Right cardiac atrium (tissue), 5 donors: ENCODE measurements at regions of chr10 and their contacts with region 1.

Region 1: DNA sequence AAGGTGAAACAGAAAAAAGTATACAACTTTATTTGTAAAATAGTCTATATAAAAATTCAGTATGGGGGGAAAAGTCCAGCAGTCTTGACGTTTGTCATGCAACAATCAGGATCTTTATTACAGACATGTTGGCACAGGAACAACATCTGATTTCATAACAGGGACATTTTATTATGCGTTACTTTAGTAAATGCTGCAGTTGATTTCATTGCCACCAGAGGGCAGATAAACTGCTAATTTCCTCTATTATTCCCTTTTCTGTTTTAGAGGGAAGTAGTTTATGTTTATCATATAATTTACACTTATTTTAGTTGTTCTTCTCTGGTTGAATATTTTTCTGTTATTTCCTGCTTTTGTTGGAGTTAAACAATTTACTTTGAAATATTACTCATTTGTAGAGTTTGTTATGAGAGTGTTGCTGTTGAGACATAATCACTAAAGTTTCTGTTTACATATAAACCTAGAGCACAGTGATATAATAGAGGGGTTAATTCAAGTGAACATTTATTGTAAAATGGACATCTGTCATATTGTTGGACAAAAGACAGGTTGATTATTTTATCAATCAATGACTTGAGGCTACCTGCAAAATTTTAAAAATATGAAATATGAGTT is 3.3 kb downstream of the PLXDC2 start:
- DNase-seq: no peak
- ATAC-seq: no peak
- H3K4me3 ChIP-seq: no peak overlapping the region
- H3K27ac ChIP-seq: no peak overlapping the region
- H3K4me1 ChIP-seq: no peaks in the 10 kb centered on the region
- H3K27me3 ChIP-seq: no peaks in the 10 kb centered on the region

Region 2: GRCh38 chr10:19922236-19922963 is 102.9 kb after region 1 on chr10:
- intact Hi-C with region 1: loop called in 2 of 4 experiments (anchors 10 kb)
- DNase-seq: no peak
- ATAC-seq: peak; percentile 73 to 77
- H3K4me3 ChIP-seq: no peak overlapping the region
- H3K27ac ChIP-seq: peak overlapping the region; percentile 99
- H3K4me1 ChIP-seq: peaks cover 10% of the 10 kb centered on the region
- H3K27me3 ChIP-seq: no peaks in the 10 kb centered on the region

Region 3: GRCh38 chr10:20768843-20769242 is 949.3 kb after region 1 on chr10:
- intact Hi-C with region 1: loop called in 3 of 4 experiments (anchors 10 kb)
- DNase-seq: no peak
- ATAC-seq: no peak
- H3K4me3 ChIP-seq: no peak overlapping the region
- H3K27ac ChIP-seq: no peak overlapping the region
- H3K4me1 ChIP-seq: no peaks in the 10 kb centered on the region
- H3K27me3 ChIP-seq: no peaks in the 10 kb centered on the region